ENCODE measurements at regions of chrX and their contacts with region 1.

Region 1: DNA sequence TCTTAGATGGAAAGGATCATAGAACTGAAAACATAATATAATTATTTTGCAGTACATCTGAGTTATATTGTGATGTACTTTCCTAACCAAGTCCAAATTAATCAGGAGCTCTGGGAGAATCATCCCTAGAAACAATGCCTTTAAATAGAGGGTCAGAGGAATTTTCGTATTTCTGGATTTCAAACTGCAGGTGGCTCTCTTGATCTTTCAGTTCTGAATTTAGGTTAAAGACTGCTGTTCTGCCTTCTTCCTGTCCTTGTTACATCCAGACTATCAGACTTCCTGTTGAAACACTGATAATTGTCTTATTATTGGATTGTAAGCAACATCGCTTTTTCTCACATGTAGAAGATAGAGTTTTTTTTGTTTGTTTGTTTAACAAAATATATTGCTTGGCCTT is 142.7 kb downstream of the RPA4 start:
- DNase-seq: no peak
- H3K4me3 Mint-ChIP-seq: no peak overlapping the region
- H3K27ac Mint-ChIP-seq: no peak overlapping the region
- H3K4me1 Mint-ChIP-seq: no peaks in the 10 kb centered on the region
- H3K27me3 Mint-ChIP-seq: no peaks in the 10 kb centered on the region

Region 2: DNA sequence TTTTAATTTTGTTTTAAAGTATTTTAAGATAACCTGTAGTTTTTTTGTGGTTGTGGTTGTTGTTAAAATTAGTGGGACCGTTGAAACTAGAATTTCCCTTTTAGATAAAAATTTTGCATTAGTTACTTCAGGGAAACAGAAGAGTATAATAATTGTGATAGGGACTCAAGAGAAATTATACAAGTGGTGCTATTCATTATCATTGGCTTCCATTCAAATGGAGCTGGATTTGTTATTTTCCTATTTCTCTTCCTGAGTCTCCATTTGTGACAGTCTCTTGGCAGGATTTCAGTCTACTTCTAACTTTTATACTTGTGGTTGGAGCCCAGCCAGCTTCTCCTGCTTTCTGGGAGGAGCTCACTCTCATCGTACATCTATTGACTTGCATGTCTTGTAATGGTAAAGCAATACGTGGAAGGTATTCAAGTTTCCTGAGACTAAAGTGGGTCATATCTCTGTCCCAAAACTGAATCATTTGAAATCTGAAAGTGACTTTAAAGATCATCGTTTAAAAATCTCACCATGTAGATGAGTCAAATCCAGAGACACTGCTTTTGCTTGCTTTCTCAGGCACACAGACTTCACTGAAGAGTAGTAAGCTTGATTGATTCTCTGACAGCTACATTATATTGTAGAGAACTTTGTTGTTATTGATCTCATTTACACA is 13.1 kb after region 1 on chrX:
- intact Hi-C with region 1: loop called (anchors 1 kb)
- DNase-seq: no peak
- H3K4me3 Mint-ChIP-seq: no peak overlapping the region
- H3K27ac Mint-ChIP-seq: peak overlapping the region; percentile 52
- H3K4me1 Mint-ChIP-seq: peaks cover 11% of the 10 kb centered on the region
- H3K27me3 Mint-ChIP-seq: no peaks in the 10 kb centered on the region

Region 3: GRCh38 chrX:97211070-97211469 is 184.7 kb after region 1 on chrX:
- intact Hi-C with region 1: loop called (anchors 2 kb)
- DNase-seq: no peak
- H3K4me3 Mint-ChIP-seq: no peak overlapping the region
- H3K27ac Mint-ChIP-seq: no peak overlapping the region
- H3K4me1 Mint-ChIP-seq: no peaks in the 10 kb centered on the region
- H3K27me3 Mint-ChIP-seq: no peaks in the 10 kb centered on the region

Region 4: GRCh38 chrX:97685753-97686152 is 659.3 kb after region 1 on chrX:
- intact Hi-C with region 1: loop called (anchors 2 kb)
- DNase-seq: no peak
- H3K4me3 Mint-ChIP-seq: no peak overlapping the region
- H3K27ac Mint-ChIP-seq: no peak overlapping the region
- H3K4me1 Mint-ChIP-seq: no peaks in the 10 kb centered on the region
- H3K27me3 Mint-ChIP-seq: peaks cover 2% of the 10 kb centered on the region

Measured in activated T-helper 1 cell treated with anti-CD3 and anti-CD28 coated beads, Interleukin-12 subunit alpha, Interleukin-12 subunit beta, Interleukin-2, Interleukin-4 antibody, amounts not matched to agents 30 ng/mL and 10 ng/mL and 1 ng/mL, durations not matched to agents 14 hours and 24 hours and 36 hours (primary cell).